ENCODE measurements at regions of chr12 and their contacts with region 1.

Region 1: GRCh38 chr12:89542912-89543592 is 17.2 kb upstream of the POC1B start:
- DNase-seq: peak; percentile 38
- ATAC-seq: peak; percentile 94
- H3K4me3 ChIP-seq: no peak overlapping the region
- H3K27ac ChIP-seq: no peak overlapping the region
- H3K4me1 ChIP-seq: peaks cover 4% of the 10 kb centered on the region; the same call in 1 of the 2 replicates
- H3K27me3 ChIP-seq: no peaks in the 10 kb centered on the region
- CTCF ChIP-seq: peak; percentile 86 to 91 (median 89)
- EP300 ChIP-seq: no peak
- POLR2A ChIP-seq: no peak
- RAD21 ChIP-seq: peak; percentile 99

Region 2: DNA sequence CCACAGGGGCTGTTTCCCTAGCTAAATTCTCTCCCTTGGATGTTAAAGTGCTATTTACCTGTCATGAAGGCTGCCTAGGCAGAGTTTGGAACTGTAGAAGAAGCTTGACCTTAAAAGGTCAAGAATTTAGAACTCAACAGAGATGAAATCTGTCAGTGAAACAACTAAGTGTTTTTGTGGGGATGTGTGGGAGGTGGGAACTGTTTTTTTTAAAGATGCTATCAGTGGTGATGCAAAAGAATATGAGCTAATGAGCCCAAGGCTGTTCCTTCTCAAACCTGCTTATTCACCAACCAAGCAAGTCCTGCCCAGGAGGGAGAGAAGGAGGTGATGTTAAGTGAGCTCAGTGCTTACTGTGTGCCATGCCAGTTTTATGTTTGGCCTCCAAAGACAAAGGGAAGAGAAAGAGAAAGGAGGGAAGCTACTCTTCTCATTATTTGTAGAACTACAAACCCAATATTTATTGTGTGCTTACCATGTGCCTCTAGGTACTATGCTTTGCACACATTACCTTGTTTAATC is 23.6 kb after region 1 on chr12:
- CTCF ChIA-PET with region 1: interaction called, 3 read pairs
- POLR2A ChIA-PET with region 1: no interaction called
- RAD21 ChIA-PET with region 1: interaction called, 3 read pairs
- SMC1A ChIA-PET with region 1: interaction called, 11 read pairs
- in situ Hi-C with region 1: no loop called
- intact Hi-C with region 1: no loop called
- DNase-seq: no peak
- ATAC-seq: peak; percentile 44
- H3K4me3 ChIP-seq: no peak overlapping the region
- H3K27ac ChIP-seq: no peak overlapping the region
- H3K4me1 ChIP-seq: no peaks in the 10 kb centered on the region
- H3K27me3 ChIP-seq: no peaks in the 10 kb centered on the region
- CTCF ChIP-seq: no peak
- EP300 ChIP-seq: no peak
- POLR2A ChIP-seq: no peak
- RAD21 ChIP-seq: no peak

Region 3: DNA sequence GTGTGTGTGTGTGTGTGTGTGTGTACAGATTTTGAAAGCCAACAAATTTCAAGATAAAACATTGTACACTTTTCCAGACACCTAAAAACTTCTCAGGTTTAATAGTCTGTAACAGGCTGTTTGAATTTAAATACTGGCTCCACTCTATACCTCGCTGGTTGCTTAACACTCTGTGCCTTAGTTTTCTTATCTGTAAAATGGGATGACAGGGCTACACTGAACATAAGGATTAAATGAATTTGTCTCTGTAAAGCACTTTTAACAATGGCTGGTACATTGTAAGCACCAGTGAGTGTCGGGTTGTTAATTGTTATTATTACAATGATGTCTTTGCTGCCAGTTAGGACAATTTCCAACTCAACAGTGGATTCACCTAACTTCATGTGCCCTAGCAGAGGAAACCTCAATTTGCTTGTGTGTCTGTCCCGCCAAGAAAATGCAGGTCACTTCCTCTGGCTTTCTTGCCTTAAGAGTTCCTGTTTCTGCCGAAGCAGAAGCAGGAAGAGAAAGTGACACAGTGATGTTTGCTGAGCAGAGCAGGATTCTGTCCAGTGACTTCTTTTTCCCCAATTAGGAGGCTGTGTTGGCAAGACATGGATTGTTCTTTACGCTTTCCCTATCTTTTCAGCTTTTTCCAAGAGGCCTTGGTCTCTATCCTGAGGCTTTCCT is 319.6 kb after region 1 on chr12:
- CTCF ChIA-PET with region 1: interaction called, 9 read pairs
- POLR2A ChIA-PET with region 1: no interaction called
- RAD21 ChIA-PET with region 1: interaction called, 13 read pairs
- SMC1A ChIA-PET with region 1: interaction called, 10 read pairs
- in situ Hi-C with region 1: no loop called
- intact Hi-C with region 1: loop called (anchors 5 kb)
- DNase-seq: peak; percentile 79
- ATAC-seq: peak; percentile 75
- H3K4me3 ChIP-seq: peak overlapping the region; percentile 60
- H3K27ac ChIP-seq: peak overlapping the region; percentile 89
- H3K4me1 ChIP-seq: peaks cover 39% of the 10 kb centered on the region
- H3K27me3 ChIP-seq: no peaks in the 10 kb centered on the region
- CTCF ChIP-seq: no peak
- EP300 ChIP-seq: peak in 1 of 2 experiments; percentile 17; a peak in 1 of 4 replicates
- POLR2A ChIP-seq: peak; percentile 58
- RAD21 ChIP-seq: 0 out of 2 replicates have a peak, but pooled peaks have one; percentile 19

Region 4: DNA sequence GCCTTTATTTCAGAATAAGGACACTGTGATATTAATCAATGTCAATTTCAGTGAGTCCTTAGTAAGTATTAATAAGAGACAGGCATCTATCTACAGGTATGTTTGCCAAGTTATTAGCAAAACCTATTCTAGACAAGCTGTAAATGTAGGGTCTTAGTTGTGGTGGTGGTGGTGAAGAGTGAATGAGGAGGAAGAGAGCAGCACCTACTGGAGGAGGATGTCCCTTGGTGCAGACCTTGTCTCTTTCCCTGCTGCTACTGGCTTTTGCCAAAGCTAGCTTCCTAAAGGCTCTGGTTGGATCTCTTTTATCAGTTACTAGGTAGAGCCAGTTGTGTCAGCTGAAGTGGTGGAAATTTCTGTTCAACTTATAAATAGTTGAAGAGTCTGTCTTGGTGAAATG is 470.4 kb after region 1 on chr12:
- CTCF ChIA-PET with region 1: interaction called, 70 read pairs
- POLR2A ChIA-PET with region 1: no interaction called
- RAD21 ChIA-PET with region 1: interaction called, 43 read pairs
- SMC1A ChIA-PET with region 1: interaction called, 64 read pairs
- in situ Hi-C with region 1: no loop called
- intact Hi-C with region 1: loop called (anchors 1 kb)
- DNase-seq: peak; percentile 8
- ATAC-seq: peak; percentile 94
- H3K4me3 ChIP-seq: no peak overlapping the region
- H3K27ac ChIP-seq: no peak overlapping the region
- H3K4me1 ChIP-seq: no peaks in the 10 kb centered on the region
- H3K27me3 ChIP-seq: no peaks in the 10 kb centered on the region
- CTCF ChIP-seq: peak; percentile 45 to 73 (median 54); a peak in 5 of 6 replicates
- EP300 ChIP-seq: no peak
- POLR2A ChIP-seq: no peak
- RAD21 ChIP-seq: peak; percentile 60

Region 5: DNA sequence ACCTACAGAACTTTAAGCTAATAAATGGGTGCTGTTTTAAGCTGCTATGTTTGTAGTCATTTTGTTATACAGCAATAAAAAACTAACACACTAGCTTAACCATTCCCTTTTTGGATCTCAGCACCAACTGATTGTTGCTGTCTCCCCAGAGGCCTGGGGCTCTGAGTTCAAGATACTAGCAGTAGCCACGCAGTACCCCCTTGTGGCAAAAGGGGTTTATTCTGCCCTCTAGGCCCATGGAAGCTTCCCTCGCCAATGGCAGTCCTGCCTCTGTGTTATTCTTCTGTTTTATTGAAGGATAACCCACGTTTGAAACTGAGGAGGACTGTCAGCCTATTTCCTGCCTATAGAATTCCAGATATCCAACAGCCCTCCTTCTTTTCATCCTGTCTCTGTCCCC is 620.9 kb after region 1 on chr12:
- CTCF ChIA-PET with region 1: interaction called, 22 read pairs
- POLR2A ChIA-PET with region 1: no interaction called
- RAD21 ChIA-PET with region 1: interaction called, 4 read pairs
- SMC1A ChIA-PET with region 1: interaction called, 24 read pairs
- in situ Hi-C with region 1: no loop called
- intact Hi-C with region 1: loop called (anchors 2 kb)
- DNase-seq: no peak
- ATAC-seq: peak; percentile 81
- H3K4me3 ChIP-seq: no peak overlapping the region
- H3K27ac ChIP-seq: no peak overlapping the region
- H3K4me1 ChIP-seq: no peaks in the 10 kb centered on the region
- H3K27me3 ChIP-seq: no peaks in the 10 kb centered on the region
- CTCF ChIP-seq: peak in 2 of 3 experiments; percentile 23 to 24; a peak in 2 of 6 replicates
- EP300 ChIP-seq: no peak
- POLR2A ChIP-seq: no peak
- RAD21 ChIP-seq: peak; percentile 36; the same call in 1 of the 2 replicates

Region 6: DNA sequence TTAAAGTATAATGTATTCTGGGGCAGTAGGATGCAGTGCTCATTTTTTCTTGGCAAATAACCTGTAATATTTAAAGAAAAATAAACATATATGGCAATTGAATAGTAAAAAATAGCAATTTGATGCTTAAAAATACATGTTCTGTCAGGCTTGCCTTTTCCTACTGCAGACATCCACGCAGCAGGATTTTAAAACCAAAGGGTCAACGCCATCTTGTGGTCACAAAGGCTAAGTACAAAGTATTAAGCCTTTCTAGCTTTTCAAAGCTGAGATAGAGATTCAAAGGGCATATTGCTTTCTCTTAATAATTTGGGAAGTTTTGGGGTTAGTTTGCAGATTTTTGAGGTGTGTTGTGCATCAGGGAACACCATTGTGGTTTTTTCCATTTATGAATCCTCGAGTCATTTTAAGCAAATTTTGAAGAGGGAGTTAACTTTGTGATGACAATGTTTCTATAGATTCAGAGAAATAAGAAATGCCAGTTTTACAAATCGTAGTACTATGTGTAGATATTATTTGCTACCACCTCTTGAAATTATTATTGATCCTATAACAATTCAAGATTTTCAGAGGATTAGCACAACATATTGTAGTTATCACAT is 1416.6 kb after region 1 on chr12:
- CTCF ChIA-PET with region 1: no interaction called
- POLR2A ChIA-PET with region 1: no interaction called
- RAD21 ChIA-PET with region 1: no interaction called
- SMC1A ChIA-PET with region 1: no interaction called
- in situ Hi-C with region 1: no loop called
- intact Hi-C with region 1: loop called (anchors 10 kb)
- DNase-seq: no peak
- ATAC-seq: peak; percentile 84
- H3K4me3 ChIP-seq: no peak overlapping the region
- H3K27ac ChIP-seq: no peak overlapping the region
- H3K4me1 ChIP-seq: no peaks in the 10 kb centered on the region
- H3K27me3 ChIP-seq: no peaks in the 10 kb centered on the region
- CTCF ChIP-seq: peak; percentile 66 to 71 (median 69)
- EP300 ChIP-seq: no peak
- POLR2A ChIP-seq: no peak
- RAD21 ChIP-seq: peak; percentile 60

Measured in GM12878 (cell line).